ENCODE measurements at regions of chr7 and their contacts with region 1.

Region 1: GRCh38 chr7:107277331-107277730 is 108.5 kb downstream of the HBP1 start:
- DNase-seq: no peak
- H3K4me3 ChIP-seq: no peak overlapping the region
- H3K27ac ChIP-seq: peak overlapping the region in 1 of 4 donors; percentile 35
- H3K4me1 ChIP-seq: peaks cover 0 to 9% (median 4%) of the 10 kb centered on the region in 4 donors
- H3K27me3 ChIP-seq: no peaks in the 10 kb centered on the region
- CTCF ChIP-seq: no peak
- EP300 ChIP-seq: no peak
- POLR2A ChIP-seq: no peak

Region 2: DNA sequence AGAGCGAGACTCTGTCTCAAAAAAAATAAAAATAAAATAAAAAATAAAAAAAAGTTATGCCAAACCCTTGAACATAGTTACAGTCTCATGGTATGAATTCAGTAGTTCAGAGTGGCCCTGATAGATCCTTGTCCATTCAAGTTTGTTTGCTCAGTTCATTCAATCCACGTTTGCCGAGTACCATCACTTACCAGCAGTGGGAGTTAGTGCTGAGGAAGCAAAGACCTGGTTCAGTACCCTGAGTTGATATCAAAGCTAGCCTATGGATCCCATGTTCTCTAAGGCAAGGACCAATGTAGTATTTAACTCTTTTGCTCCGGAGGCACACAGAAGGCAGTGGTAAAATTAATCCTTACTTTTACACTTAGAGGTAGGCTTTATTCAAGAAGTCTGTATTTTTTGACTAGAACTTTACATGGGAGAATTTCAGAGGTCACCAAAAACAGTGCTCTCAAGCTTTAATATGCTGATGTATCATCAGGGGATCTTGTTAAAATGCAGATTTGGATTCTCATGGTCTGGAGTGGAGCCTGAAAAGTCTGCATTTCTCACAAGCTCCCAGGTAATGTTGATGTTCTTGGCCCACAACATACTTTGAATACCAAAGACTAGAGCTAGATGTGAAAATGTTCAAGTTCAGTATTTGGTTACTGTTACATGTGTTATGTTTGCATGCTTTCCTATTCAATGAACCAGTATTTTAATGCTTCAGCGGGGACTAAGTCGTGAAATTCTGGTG is 146.7 kb before region 1 on chr7:
- intact Hi-C with region 1: no loop called
- DNase-seq: no peak
- H3K4me3 ChIP-seq: no peak overlapping the region
- H3K27ac ChIP-seq: no peak overlapping the region
- H3K4me1 ChIP-seq: no peaks in the 10 kb centered on the region
- H3K27me3 ChIP-seq: no peaks in the 10 kb centered on the region
- CTCF ChIP-seq: no peak
- EP300 ChIP-seq: no peak
- POLR2A ChIP-seq: no peak

Region 3: DNA sequence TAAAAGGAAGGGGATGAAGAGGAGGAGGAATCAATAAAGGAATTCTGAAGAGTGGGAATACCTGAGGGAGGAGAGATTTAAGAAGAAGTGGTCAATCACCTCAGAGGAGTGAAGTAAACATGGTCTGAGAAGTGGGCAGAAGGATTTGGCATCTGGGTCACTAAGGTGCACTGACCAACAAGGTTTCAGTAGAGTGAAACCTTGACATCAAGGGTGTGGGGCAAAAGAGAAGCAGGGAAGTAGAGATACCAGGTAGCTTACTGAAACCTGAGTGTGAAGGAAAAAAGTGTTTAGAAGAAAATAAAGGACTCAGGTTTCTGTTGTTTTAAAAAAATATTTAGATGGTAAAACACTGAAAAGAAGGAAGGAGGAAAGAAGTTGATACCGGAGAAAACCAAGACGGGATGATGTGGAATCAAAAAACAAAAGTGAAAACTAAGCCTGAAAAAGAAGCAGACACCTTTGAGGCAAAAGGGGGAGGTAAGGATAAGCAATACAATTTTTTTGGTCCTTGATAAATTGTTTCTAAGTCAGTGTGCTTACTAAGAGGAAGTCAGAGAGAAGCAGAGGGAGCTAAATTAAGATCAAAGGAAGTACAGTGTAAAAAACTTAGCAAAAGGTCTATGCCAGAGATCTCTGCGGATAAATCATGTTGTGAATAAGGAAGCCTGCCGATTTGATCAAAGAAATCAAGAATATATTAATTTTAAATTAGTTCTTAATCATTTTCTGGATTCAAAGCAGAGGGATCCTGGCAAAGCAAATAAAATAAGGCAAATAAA is 55.3 kb after region 1 on chr7:
- intact Hi-C with region 1: loop called (anchors 10 kb)
- DNase-seq: no peak
- H3K4me3 ChIP-seq: no peak overlapping the region
- H3K27ac ChIP-seq: no peak overlapping the region
- H3K4me1 ChIP-seq: no peaks in the 10 kb centered on the region
- H3K27me3 ChIP-seq: no peaks in the 10 kb centered on the region
- CTCF ChIP-seq: no peak
- EP300 ChIP-seq: no peak
- POLR2A ChIP-seq: no peak

Region 4: DNA sequence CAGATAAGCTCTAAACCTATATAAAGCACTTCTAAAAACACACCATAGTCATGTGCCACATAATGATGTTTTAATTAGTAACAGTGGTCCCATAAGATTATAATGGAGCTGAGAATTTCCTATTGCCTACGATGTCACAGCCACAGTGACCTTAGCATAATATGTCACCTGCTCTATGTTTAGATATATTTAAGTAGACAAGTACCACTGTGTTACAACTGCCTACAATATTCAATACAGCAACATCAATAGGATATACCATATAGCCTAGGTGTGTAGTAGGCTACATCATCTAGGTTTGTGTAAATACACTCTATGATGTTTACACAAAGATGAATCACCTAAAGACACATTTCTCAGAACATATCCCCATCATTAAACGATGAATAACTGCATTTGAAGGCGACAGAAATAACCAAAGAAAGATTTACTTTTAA is 217.0 kb after region 1 on chr7:
- intact Hi-C with region 1: no loop called
- DNase-seq: no peak
- H3K4me3 ChIP-seq: no peak overlapping the region
- H3K27ac ChIP-seq: no peak overlapping the region
- H3K4me1 ChIP-seq: no peaks in the 10 kb centered on the region
- H3K27me3 ChIP-seq: no peaks in the 10 kb centered on the region
- CTCF ChIP-seq: no peak
- EP300 ChIP-seq: no peak
- POLR2A ChIP-seq: no peak